ENCODE measurements at regions of chr17 and their contacts with region 1.

Region 1: DNA sequence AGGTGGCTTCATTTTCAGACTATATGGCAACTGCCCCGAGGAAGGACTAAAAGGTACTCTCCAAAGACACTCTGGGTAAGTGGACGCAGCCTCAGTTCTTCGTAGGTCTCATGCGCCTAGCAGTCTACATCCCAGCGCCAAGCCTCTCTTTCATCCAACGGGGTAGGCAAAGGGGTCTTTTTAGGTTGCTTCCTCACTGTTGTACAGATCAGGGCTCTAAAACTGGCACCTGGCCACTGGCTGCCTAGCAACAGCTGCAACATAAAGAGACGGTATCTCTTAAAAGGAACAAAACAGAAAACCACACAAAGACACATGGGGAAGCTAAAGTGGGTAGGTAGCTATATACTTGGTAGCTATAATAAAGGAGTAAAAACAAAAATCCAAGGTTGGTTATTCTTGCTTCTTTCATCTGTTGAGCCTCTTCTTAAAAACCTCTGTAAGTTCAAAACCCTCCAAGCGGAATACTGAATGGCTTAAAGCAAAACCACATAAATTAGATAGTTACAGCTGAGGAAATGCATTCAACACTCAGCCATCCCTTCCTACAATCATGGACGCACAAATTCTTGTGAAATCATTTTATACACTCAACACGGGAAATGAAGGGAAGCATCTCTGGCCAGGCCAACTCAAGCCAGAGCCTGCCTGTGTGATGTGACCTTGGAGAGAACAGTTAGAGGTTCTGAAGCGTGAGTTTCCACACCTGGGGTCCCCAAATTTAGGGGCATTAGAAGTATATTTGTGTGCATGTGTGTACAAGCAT is 22.7 kb downstream of the CYTH1 start:
- DNase-seq: peak; percentile 93
- H3K4me3 ChIP-seq: peak overlapping the region; percentile 57
- H3K27ac ChIP-seq: peak overlapping the region; percentile 90
- H3K4me1 ChIP-seq: peaks cover 66% of the 10 kb centered on the region
- CTCF ChIP-seq: no peak

Region 2: GRCh38 chr17:78448356-78448993 is 310.9 kb before region 1 on chr17:
- CTCF ChIA-PET with region 1: no interaction called
- POLR2A ChIA-PET with region 1: no interaction called
- intact Hi-C with region 1: no loop called
- DNase-seq: no peak
- H3K4me3 ChIP-seq: no peak overlapping the region
- H3K27ac ChIP-seq: no peak overlapping the region
- H3K4me1 ChIP-seq: peaks cover 8% of the 10 kb centered on the region
- CTCF ChIP-seq: peak; percentile 65

Region 3: DNA sequence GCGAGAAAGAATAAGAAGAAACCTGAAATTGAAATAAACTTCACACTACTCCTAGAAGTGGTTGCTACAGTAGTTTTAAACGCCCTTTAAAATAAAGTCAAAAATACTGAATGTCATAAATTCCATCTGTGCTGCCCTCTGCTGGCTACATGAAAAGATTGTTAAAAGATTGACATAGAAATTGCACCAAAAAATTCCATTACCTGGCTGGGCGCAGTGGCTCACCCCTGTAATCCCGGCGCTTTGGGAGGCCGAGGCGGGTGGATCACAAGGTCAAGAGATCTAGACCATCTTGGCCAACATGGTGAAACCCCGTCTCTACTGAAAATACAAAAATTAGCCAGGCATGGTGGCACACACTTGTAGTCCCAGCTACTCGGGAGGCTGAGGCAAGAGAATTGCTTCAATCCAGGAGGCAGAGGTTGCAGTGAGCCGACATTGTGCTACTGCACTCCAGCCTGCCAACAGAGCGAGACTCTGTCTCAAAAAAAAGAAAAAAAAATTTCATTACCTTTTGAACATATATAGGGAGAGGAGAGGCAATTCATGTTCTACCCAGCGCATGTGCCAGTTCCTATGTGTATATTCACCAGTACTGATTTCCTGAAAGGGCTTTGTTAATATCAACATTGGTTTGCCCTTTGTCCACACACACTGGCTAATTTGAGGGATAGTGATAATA is 13.8 kb before region 1 on chr17:
- CTCF ChIA-PET with region 1: interaction called, 5 read pairs
- POLR2A ChIA-PET with region 1: interaction called, 11 read pairs
- intact Hi-C with region 1: no loop called
- DNase-seq: peak; percentile 70
- H3K4me3 ChIP-seq: no peak overlapping the region
- H3K27ac ChIP-seq: no peak overlapping the region
- H3K4me1 ChIP-seq: peaks cover 100% of the 10 kb centered on the region
- CTCF ChIP-seq: peak; percentile 92

Region 4: GRCh38 chr17:78774956-78775571 is 15.7 kb after region 1 on chr17:
- CTCF ChIA-PET with region 1: no interaction called
- POLR2A ChIA-PET with region 1: interaction called, 8 read pairs
- intact Hi-C with region 1: loop called (anchors 1 kb)
- DNase-seq: peak; percentile 60
- H3K4me3 ChIP-seq: peak overlapping the region; percentile 67
- H3K27ac ChIP-seq: peak overlapping the region; percentile 82
- H3K4me1 ChIP-seq: peaks cover 65% of the 10 kb centered on the region
- CTCF ChIP-seq: no peak

Region 5: GRCh38 chr17:78781948-78782916 is 22.8 kb after region 1 on chr17 and contains the start of gene CYTH1:
- CTCF ChIA-PET with region 1: no interaction called
- POLR2A ChIA-PET with region 1: interaction called, 6 read pairs
- intact Hi-C with region 1: loop called (anchors 1 kb)
- DNase-seq: peak; percentile 94
- H3K4me3 ChIP-seq: peak within 1 kb of the TSS; percentile 91
- H3K27ac ChIP-seq: peak within 1 kb of the TSS; percentile 85
- H3K4me1 ChIP-seq: peaks cover 37% of the 10 kb centered on the region
- CTCF ChIP-seq: no peak
- total RNA-seq, gene CYTH1: 73.0 and 88.1 TPM in 2 replicates

Region 6: GRCh38 chr17:78903101-78903779 is 143.9 kb after region 1 on chr17 and contains the start of gene CEP295NL:
- CTCF ChIA-PET with region 1: no interaction called
- POLR2A ChIA-PET with region 1: no interaction called
- intact Hi-C with region 1: no loop called
- DNase-seq: no peak
- H3K4me3 ChIP-seq: no peak within 1 kb of the TSS
- H3K27ac ChIP-seq: no peak within 1 kb of the TSS
- H3K4me1 ChIP-seq: no peaks in the 10 kb centered on the region
- CTCF ChIP-seq: no peak
- total RNA-seq, gene CEP295NL: not detected in 2 replicates

Measured in OCI-LY7 (cell line).